T-cell (primary cell): ENCODE measurements at regions of chr5 and their contacts with region 1.

Region 1: DNA sequence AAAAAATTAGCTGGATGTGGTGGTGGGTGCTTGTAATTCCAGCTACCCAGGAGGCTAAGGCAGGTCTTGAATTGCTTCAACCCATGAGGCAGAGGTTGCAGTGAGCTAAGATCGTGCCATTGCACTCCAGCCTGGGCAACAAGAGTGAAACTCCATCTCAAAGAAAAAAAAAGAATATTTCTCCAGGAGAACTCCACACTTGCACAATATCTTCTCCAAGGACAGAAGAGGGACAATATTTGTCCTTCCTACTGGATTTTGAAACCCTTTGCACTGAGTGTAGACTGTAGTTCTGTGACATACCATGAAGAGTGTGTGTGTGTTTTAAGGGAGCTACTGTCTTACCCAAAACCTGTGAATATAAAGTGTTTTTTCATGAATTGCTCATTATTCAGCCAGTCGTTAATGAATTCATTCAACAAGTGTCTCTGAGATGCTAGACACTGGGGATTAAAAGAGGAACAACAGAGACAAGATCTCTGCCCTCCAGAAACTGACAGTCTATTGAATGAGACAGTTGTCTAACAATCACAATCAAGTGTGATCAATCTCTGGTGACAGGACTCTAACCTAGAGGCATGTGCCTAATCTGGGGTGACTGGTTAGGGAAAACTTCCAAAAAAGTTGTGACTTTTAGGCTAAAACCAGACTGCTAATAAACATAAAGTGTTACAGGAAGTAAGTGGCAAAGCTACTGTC is 9.8 kb upstream of the UBE2D2 start:
- DNase-seq: no peak
- ATAC-seq: no peak
- H3K4me3 ChIP-seq: no peak overlapping the region
- H3K4me3 Mint-ChIP-seq: no peak overlapping the region
- H3K27ac ChIP-seq: no peak overlapping the region
- H3K27ac Mint-ChIP-seq: no peak overlapping the region
- H3K4me1 ChIP-seq: no peaks in the 10 kb centered on the region
- H3K4me1 Mint-ChIP-seq: peaks cover 5 to 7% (median 6%) of the 10 kb centered on the region in 3 donors
- H3K27me3 ChIP-seq: peaks cover 0 to 2% of the 10 kb centered on the region in 2 experiments
- H3K27me3 Mint-ChIP-seq: peaks cover 3 to 5% of the 10 kb centered on the region in 2 donors

Region 2: GRCh38 chr5:139256820-139257219 is 294.5 kb before region 1 on chr5:
- CTCF ChIA-PET with region 1: no interaction called
- POLR2A ChIA-PET with region 1: no interaction called
- DNase-seq: no peak
- ATAC-seq: no peak
- H3K4me3 ChIP-seq: no peak overlapping the region
- H3K4me3 Mint-ChIP-seq: no peak overlapping the region
- H3K27ac ChIP-seq: no peak overlapping the region
- H3K27ac Mint-ChIP-seq: no peak overlapping the region
- H3K4me1 ChIP-seq: no peaks in the 10 kb centered on the region
- H3K4me1 Mint-ChIP-seq: peaks cover 1 to 2% (median 2%) of the 10 kb centered on the region in 3 donors
- H3K27me3 ChIP-seq: peaks cover 0 to 7% of the 10 kb centered on the region in 2 experiments
- H3K27me3 Mint-ChIP-seq: peaks cover 14 to 17% of the 10 kb centered on the region in 2 donors

Region 3: DNA sequence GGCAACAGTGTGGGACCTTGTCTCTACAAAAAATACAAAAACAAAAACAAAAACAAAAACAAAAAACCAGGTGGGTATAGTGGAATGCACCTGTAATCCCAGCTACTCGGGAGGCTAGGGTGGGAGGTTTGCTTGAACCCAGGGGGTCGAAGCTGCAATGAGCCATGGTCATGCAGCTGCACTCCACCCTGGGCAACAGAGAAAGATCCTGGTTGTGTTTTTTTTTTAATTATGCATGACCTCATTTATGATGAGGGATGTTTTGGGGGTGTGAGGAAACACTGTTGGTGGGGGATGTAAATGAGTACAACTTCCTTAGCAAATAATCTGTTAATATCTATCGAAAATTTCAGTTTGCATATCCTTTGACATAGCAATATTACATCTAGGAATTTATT is 19.6 kb before region 1 on chr5:
- CTCF ChIA-PET with region 1: no interaction called
- POLR2A ChIA-PET with region 1: interaction called in 1 of 2 experiments, 13 read pairs
- DNase-seq: no peak
- ATAC-seq: no peak
- H3K4me3 ChIP-seq: no peak overlapping the region
- H3K4me3 Mint-ChIP-seq: no peak overlapping the region
- H3K27ac ChIP-seq: no peak overlapping the region
- H3K27ac Mint-ChIP-seq: no peak overlapping the region
- H3K4me1 ChIP-seq: no peaks in the 10 kb centered on the region
- H3K4me1 Mint-ChIP-seq: no peaks in the 10 kb centered on the region
- H3K27me3 ChIP-seq: peaks cover 0 to 7% of the 10 kb centered on the region in 2 experiments
- H3K27me3 Mint-ChIP-seq: no peaks in the 10 kb centered on the region